ENCODE measurements at regions of chr1 and their contacts with region 1.

Region 1: DNA sequence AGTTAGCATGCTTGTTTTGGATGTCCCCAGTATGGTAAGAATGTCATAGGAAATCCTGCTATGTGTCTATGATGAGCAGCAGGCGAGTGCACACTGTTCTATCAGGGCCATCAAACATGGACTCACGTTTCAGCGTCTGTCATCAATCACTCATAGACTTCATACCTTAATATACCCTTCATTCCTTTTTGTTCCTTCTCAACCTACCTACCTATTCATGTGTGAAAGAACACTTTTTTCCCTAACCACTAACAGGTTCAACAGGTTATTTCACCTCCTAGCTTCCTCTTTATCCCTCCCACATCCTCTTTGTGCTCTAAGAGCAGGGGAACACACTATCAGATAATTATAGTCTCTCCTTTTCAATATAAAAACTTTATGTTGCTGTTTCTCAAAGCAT is 300.6 kb downstream of the TM2D1 start:
- DNase-seq: no peak
- ATAC-seq: no peak

Region 2: DNA sequence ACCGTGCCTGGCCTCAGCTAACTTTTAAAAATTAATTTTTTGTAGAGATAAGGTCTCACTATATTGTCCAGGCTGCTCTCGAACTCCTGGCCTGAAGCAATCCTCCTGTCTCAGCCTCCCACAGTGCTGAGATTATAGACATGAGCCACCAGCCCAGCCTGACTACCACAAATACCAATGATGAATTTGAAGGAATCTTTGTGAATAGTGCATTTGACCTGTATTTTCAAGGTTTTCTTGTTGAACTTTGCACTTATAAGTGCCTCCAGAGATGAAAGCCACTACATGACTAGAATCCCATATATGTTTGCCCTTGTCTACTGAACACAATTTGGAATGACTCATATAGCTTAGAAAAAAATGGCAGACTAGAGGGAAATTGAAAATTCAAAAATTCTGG is 44.7 kb before region 1 on chr1:
- intact Hi-C with region 1: loop called (anchors 5 kb)
- DNase-seq: no peak
- ATAC-seq: no peak

Measured in Right ventricle myocardium inferior (tissue), 1 donor.